ENCODE measurements at regions of chr1 and their contacts with region 1.

Region 1: DNA sequence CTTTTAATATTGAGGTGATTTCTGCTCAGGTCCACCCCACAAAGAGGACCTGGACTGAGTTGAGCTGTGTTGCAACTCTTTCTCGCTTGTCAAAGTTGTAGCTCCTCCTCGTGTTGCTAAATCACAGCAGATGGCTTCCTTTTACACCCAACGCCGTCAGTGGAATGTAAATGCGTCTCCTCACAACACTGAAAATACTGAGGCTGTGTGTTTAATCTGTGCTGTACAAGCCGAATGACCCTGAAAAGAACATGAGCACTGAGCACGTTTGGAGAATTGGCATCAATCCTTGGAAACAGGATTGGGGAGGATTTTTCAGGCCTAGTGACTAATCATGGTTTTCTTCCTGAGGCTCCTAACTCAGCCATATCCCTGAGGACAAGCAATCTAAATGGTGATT is 196.0 kb downstream of the CRB1 start:
- DNase-seq: no peak
- H3K4me3 ChIP-seq: no peak overlapping the region
- H3K27ac ChIP-seq: no peak overlapping the region
- H3K4me1 ChIP-seq: 0 out of 2 replicates have a peak, but pooled peaks cover 6% of the 10 kb centered on the region
- H3K27me3 ChIP-seq: no peaks in the 10 kb centered on the region
- CTCF ChIP-seq: no peak

Region 2: GRCh38 chr1:197441990-197442389 is 22.1 kb before region 1 on chr1:
- CTCF ChIA-PET with region 1: no interaction called
- POLR2A ChIA-PET with region 1: interaction called, 24 read pairs
- intact Hi-C with region 1: no loop called
- DNase-seq: no peak
- H3K4me3 ChIP-seq: no peak overlapping the region
- H3K27ac ChIP-seq: no peak overlapping the region
- H3K4me1 ChIP-seq: no peaks in the 10 kb centered on the region
- H3K27me3 ChIP-seq: no peaks in the 10 kb centered on the region
- CTCF ChIP-seq: no peak